AG04450 (cell line): ENCODE measurements at regions of chr10 and their contacts with region 1.

Region 1: DNA sequence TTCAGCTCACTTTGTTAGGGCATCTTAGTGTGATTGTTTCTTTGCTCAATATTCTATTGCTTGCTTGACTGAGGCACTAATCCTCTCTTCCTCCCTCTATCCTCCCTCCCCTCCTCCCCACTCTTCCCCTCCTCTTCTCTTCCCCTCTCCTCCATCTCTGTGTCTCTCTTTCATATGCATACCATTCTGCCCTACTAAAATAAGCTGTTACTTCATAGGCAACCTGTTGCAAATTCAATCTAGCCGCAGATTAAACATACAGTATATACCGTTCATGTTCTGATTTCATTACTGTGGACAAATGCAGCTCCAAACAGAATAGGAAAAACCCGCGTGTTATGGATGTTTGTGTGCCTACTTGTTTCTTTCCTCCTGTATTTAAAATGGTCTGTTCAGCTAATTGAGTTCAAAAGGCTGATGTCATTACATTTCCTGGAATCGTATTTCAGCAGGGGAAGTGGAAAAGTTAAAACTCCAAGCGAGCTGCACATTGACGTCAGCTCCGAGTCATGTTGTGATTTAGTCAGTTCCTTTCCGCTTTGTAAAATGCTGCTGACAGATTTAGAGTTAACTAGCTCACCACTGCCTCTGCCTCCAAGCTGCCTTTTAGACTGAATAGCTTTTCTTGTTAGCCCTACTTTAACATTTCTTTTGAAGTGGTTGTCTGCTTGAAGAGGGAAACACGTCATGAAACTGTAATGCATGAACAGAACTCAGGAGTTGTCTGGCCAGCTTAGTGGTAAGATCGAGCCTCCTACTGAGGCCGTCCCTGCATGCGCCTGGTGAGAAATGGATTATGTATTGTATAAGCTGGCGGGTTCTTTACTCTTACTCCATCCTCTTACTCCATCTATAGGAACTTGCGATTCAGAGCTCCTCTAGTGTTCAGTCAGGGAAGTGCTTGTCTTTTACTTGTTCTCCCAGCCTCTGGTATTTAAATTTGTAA is 69.0 kb downstream of the CREM start:
- DNase-seq: peak; percentile 89
- H3K4me3 ChIP-seq: peak overlapping the region; percentile 56
- H3K27ac ChIP-seq: peak overlapping the region; percentile 98
- H3K27me3 ChIP-seq: no peaks in the 10 kb centered on the region
- CTCF ChIP-seq: peak; percentile 87

Region 2: GRCh38 chr10:35119378-35119777 is 76.3 kb before region 1 on chr10:
- CTCF ChIA-PET with region 1: interaction called, 31 read pairs
- POLR2A ChIA-PET with region 1: interaction called, 3 read pairs
- DNase-seq: no peak
- H3K4me3 ChIP-seq: no peak overlapping the region
- H3K27ac ChIP-seq: no peak overlapping the region
- H3K27me3 ChIP-seq: no peaks in the 10 kb centered on the region
- CTCF ChIP-seq: no peak

Region 3: GRCh38 chr10:35172574-35172973 is 23.1 kb before region 1 on chr10:
- CTCF ChIA-PET with region 1: interaction called, 17 read pairs
- POLR2A ChIA-PET with region 1: no interaction called
- DNase-seq: no peak
- H3K4me3 ChIP-seq: no peak overlapping the region
- H3K27ac ChIP-seq: no peak overlapping the region
- H3K27me3 ChIP-seq: no peaks in the 10 kb centered on the region
- CTCF ChIP-seq: no peak

Region 4: DNA sequence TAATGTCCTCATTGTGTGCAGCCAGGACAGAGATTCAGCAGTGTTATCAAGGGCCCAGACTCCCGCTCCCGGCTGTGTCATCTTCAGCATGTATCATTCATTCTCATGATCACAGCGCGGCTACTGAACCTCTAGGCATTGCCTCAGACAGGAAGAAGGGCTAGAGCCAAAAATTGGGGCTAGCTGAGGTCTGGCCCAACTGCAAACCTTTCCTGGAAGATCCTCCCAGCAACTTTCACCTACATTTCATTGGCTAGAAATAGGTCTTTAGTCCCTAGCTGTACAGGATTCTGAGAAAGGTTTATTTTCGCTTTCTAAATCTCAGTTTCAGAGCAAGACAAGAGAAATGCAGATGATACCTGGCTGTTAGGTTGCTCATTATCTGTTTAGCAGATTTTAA is 12.9 kb after region 1 on chr10:
- CTCF ChIA-PET with region 1: interaction called, 58 read pairs
- POLR2A ChIA-PET with region 1: no interaction called
- DNase-seq: no peak
- H3K4me3 ChIP-seq: no peak overlapping the region
- H3K27ac ChIP-seq: no peak overlapping the region
- H3K27me3 ChIP-seq: no peaks in the 10 kb centered on the region
- CTCF ChIP-seq: no peak

Region 5: DNA sequence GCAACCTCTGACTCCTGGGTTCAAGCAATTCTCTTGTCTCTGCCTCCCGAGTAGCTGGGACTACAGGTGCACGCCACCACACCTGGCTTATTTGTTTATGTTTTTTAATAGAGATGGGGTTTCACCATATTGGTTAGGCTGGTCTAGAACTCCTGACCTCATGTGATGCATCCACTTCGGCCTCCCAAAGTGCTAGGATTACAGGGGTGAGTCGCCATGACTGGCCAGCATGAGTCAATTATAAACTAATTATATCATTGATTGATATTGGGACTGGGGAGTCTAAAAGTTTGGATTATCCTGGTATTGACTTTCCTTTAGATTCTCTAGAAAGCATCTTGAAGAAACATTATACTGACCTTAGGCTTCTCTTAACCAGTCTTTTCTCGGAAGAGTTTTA is 66.8 kb after region 1 on chr10:
- CTCF ChIA-PET with region 1: no interaction called
- POLR2A ChIA-PET with region 1: no interaction called
- DNase-seq: no peak
- H3K4me3 ChIP-seq: no peak overlapping the region
- H3K27ac ChIP-seq: no peak overlapping the region
- H3K27me3 ChIP-seq: no peaks in the 10 kb centered on the region
- CTCF ChIP-seq: no peak